Heart right ventricle (tissue), 16 donors: ENCODE measurements at regions of chr13 and their contacts with region 1.

Region 1: GRCh38 chr13:50801087-50801931 is 42.2 kb downstream of the DLEU7 start:
- DNase-seq: peak in 1 of 2 donors; percentile 82
- ATAC-seq: peak; percentile 89 to 95 (median 93)
- H3K4me3 ChIP-seq: peak overlapping the region in 2 of 10 donors; percentile 21 to 22
- H3K27ac ChIP-seq: peak overlapping the region in 9 of 10 donors; percentile 4 to 63 (median 38)
- H3K4me1 ChIP-seq: peaks cover 3 to 41% (median 25%) of the 10 kb centered on the region in 9 donors
- H3K27me3 ChIP-seq: no peaks in the 10 kb centered on the region
- CTCF ChIP-seq: peak; percentile 56 to 87 (median 80)

Region 2: GRCh38 chr13:49985129-49985528 is 816.2 kb before region 1 on chr13:
- intact Hi-C with region 1: loop called in 1 of 10 experiments (anchors 10 kb)
- DNase-seq: no peak
- ATAC-seq: no peak
- H3K4me3 ChIP-seq: no peak overlapping the region
- H3K27ac ChIP-seq: no peak overlapping the region
- H3K4me1 ChIP-seq: peaks cover 0 to 12% (median 0%) of the 10 kb centered on the region in 9 donors
- H3K27me3 ChIP-seq: no peaks in the 10 kb centered on the region
- CTCF ChIP-seq: no peak

Region 3: GRCh38 chr13:50170447-50171037 is 630.8 kb before region 1 on chr13:
- intact Hi-C with region 1: loop called in 4 of 10 experiments (anchors 5 to 10 kb)
- DNase-seq: no peak
- ATAC-seq: no peak
- H3K4me3 ChIP-seq: no peak overlapping the region
- H3K27ac ChIP-seq: no peak overlapping the region
- H3K4me1 ChIP-seq: no peaks in the 10 kb centered on the region
- H3K27me3 ChIP-seq: no peaks in the 10 kb centered on the region
- CTCF ChIP-seq: peak in 7 of 9 donors; percentile 27 to 58 (median 54)

Region 4: GRCh38 chr13:50376895-50377575 is 424.3 kb before region 1 on chr13:
- intact Hi-C with region 1: loop called in 3 of 10 experiments (anchors 5 to 10 kb)
- DNase-seq: no peak
- ATAC-seq: peak in 4 of 8 donors; percentile 30 to 51 (median 36)
- H3K4me3 ChIP-seq: no peak overlapping the region
- H3K27ac ChIP-seq: no peak overlapping the region
- H3K4me1 ChIP-seq: no peaks in the 10 kb centered on the region
- H3K27me3 ChIP-seq: no peaks in the 10 kb centered on the region
- CTCF ChIP-seq: peak in 7 of 9 donors; percentile 10 to 50 (median 39)

Region 5: GRCh38 chr13:50494138-50494537 is 307.2 kb before region 1 on chr13:
- intact Hi-C with region 1: no loop called
- DNase-seq: no peak
- ATAC-seq: no peak
- H3K4me3 ChIP-seq: no peak overlapping the region
- H3K27ac ChIP-seq: no peak overlapping the region
- H3K4me1 ChIP-seq: peaks cover 0 to 12% (median 0%) of the 10 kb centered on the region in 9 donors
- H3K27me3 ChIP-seq: no peaks in the 10 kb centered on the region
- CTCF ChIP-seq: no peak

Region 6: DNA sequence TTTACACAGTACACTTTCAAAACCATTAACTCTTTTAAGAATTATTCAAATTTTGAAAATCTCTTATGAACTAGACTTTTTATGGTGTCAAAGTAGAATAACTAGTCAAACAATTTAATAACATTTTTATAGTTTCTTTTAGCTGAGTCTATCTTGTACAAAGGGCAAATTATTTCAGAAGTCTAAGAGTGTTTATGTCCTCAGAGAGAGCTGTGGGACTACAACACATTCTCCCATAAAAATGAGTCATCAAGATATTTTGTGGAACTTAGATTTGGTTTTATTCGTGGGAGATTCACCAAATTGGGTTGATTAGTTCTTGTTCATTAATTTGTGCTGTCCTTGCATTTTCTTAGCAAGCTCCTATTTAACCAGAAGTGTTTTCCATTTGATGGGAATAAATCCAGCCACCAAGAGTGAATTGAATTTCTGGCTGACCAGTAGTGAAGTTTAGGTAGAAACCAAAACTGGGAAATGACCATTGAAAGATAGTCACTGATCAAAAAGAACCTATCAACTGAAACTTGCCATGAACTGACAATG is 248.8 kb before region 1 on chr13:
- intact Hi-C with region 1: loop called in 1 of 10 experiments (anchors 10 kb)
- DNase-seq: no peak
- ATAC-seq: no peak
- H3K4me3 ChIP-seq: no peak overlapping the region
- H3K27ac ChIP-seq: no peak overlapping the region
- H3K4me1 ChIP-seq: peaks cover 0 to 14% (median 3%) of the 10 kb centered on the region in 9 donors
- H3K27me3 ChIP-seq: no peaks in the 10 kb centered on the region
- CTCF ChIP-seq: no peak

Region 7: GRCh38 chr13:50685491-50685890 is 115.8 kb before region 1 on chr13:
- intact Hi-C with region 1: loop called in 2 of 10 experiments (anchors 5 kb)
- DNase-seq: peak; percentile 81 to 90
- ATAC-seq: peak; percentile 72 to 92 (median 80)
- H3K4me3 ChIP-seq: no peak overlapping the region
- H3K27ac ChIP-seq: peak overlapping the region; percentile 2 to 89 (median 74)
- H3K4me1 ChIP-seq: peaks cover 0 to 49% (median 33%) of the 10 kb centered on the region in 9 donors
- H3K27me3 ChIP-seq: no peaks in the 10 kb centered on the region
- CTCF ChIP-seq: no peak

Region 8: GRCh38 chr13:51070005-51070649 is 268.8 kb after region 1 on chr13:
- intact Hi-C with region 1: loop called in 1 of 10 experiments (anchors 10 kb)
- DNase-seq: peak; percentile 80 to 82
- ATAC-seq: peak; percentile 68 to 86 (median 80)
- H3K4me3 ChIP-seq: no peak overlapping the region
- H3K27ac ChIP-seq: no peak overlapping the region
- H3K4me1 ChIP-seq: peaks cover 0 to 49% (median 19%) of the 10 kb centered on the region in 9 donors
- H3K27me3 ChIP-seq: peaks cover 0 to 8% (median 0%) of the 10 kb centered on the region in 7 donors
- CTCF ChIP-seq: peak; percentile 90 to 98 (median 94)